ENCODE measurements at regions of chr16 and their contacts with region 1.

Region 1: GRCh38 chr16:3625911-3626732 is 14.7 kb upstream of the SLX4 start:
- DNase-seq: peak in 2 of 9 experiments; percentile 27 to 44
- ATAC-seq: peak; percentile 85
- H3K4me3 ChIP-seq: no peak overlapping the region
- H3K4me3 Mint-ChIP-seq: peak overlapping the region; percentile 13
- H3K27ac ChIP-seq: peak overlapping the region; percentile 18 to 37
- H3K27ac Mint-ChIP-seq: peak overlapping the region; percentile 89
- H3K4me1 ChIP-seq: peaks cover 25% of the 10 kb centered on the region
- H3K4me1 Mint-ChIP-seq: peaks cover 38% of the 10 kb centered on the region
- H3K27me3 ChIP-seq: no peaks in the 10 kb centered on the region
- H3K27me3 Mint-ChIP-seq: no peaks in the 10 kb centered on the region
- CTCF ChIP-seq: no peak

Region 2: DNA sequence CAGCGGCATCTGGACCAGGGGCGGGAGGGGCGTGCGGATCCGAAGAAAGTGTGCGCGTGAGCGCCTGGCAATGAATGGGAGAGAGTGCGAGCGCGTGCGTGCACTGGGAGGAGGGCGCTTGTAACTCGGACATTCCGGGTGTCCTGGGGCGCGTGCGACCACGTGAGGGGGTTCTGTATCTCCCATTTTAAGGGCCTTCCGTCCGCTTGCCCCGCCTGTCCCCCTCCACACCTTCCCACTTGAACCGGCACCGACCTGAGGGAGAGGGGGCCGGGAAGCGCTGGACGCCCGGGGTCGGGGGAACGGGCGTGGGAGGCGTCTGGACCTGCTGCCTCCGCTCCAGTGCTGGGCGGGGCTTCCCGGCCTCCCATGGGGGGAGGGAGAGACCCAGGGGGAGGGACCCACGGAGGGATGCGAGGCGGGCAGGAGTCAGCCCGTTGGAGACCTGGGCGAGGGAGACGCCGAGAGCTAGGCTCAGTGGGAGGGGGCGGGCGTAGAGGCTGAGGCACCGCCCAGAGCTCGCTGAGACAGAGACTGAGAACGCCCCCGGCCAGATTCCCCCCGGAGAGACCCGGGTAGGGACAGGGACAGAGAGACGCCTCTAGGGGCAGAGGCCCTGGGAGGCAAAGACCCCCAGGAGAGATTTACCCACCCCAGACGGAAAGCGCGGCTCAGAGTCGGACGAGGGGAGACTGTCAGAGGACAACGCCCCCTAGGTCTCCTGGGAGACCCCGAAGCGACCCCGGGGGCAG is 662.2 kb before region 1 on chr16 and contains the start of gene KREMEN2:
- CTCF ChIA-PET with region 1: no interaction called
- POLR2A ChIA-PET with region 1: no interaction called
- intact Hi-C with region 1: no loop called
- DNase-seq: peak in 3 of 9 experiments; percentile 16 to 58 (median 48)
- ATAC-seq: peak; percentile 23
- H3K4me3 ChIP-seq: peak within 1 kb of the TSS; percentile 33 to 46
- H3K4me3 Mint-ChIP-seq: peak within 1 kb of the TSS; percentile 81
- H3K27ac ChIP-seq: no peak within 1 kb of the TSS
- H3K27ac Mint-ChIP-seq: no peak within 1 kb of the TSS
- H3K4me1 ChIP-seq: peaks cover 58% of the 10 kb centered on the region
- H3K4me1 Mint-ChIP-seq: peaks cover 35% of the 10 kb centered on the region
- H3K27me3 ChIP-seq: peaks cover 27 to 48% of the 10 kb centered on the region in 2 experiments
- H3K27me3 Mint-ChIP-seq: peaks cover 30% of the 10 kb centered on the region
- CTCF ChIP-seq: no peak
- total RNA-seq, gene KREMEN2: not detected

Region 3: DNA sequence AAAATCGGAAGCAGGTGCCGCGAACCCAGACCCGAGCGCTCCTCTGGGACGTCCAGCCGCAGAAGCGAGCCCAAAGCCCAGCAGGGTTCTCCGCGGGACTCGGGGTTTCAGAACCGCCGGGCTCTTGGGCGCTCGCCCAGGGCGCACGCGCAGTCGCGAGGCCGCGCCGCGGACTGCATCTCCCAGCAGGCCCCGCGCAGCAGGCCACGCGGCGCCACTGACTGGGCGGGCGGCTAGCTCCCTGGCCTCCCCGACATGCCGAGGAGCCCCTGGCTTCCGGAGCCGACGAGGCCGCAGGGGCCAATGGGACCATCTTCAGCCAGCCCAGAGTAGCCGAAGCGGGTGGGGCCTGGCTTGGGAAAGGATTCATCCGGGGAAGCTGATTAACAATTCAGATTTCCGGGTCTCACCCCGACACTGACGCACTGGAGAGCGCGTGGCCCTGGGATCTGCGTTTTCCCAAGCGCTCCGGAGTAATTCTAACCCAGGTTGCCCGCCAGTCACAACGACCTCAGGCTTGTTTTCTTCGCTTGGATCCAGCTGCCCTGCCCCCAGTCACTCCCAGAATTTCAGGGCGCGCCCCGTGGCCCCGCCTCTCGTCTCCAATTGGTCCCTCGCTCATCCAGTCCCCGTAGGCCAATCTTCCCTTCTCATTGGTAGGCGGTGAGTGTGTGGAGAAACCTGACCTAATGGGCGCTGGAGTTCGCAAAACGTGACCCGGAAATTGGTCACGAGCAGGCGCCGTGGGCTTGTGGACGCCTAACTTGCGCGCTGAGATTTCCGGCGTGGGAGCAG is 343.2 kb before region 1 on chr16 and contains the start of gene ZNF263:
- CTCF ChIA-PET with region 1: no interaction called
- POLR2A ChIA-PET with region 1: no interaction called
- intact Hi-C with region 1: no loop called
- DNase-seq: peak; percentile 82 to 98 (median 92)
- ATAC-seq: peak; percentile 88
- H3K4me3 ChIP-seq: peak within 1 kb of the TSS; percentile 84 to 92
- H3K4me3 Mint-ChIP-seq: peak within 1 kb of the TSS; percentile 89
- H3K27ac ChIP-seq: peak within 1 kb of the TSS; percentile 96 to 100
- H3K27ac Mint-ChIP-seq: peak within 1 kb of the TSS; percentile 96
- H3K4me1 ChIP-seq: peaks cover 28% of the 10 kb centered on the region
- H3K4me1 Mint-ChIP-seq: peaks cover 56% of the 10 kb centered on the region
- H3K27me3 ChIP-seq: no peaks in the 10 kb centered on the region
- H3K27me3 Mint-ChIP-seq: no peaks in the 10 kb centered on the region
- CTCF ChIP-seq: no peak
- total RNA-seq, gene ZNF263: 44.2 to 49.0 TPM

Region 4: GRCh38 chr16:3665508-3665907 is 39.4 kb after region 1 on chr16:
- CTCF ChIA-PET with region 1: no interaction called
- POLR2A ChIA-PET with region 1: no interaction called
- intact Hi-C with region 1: loop called in 1 of 2 experiments (anchors 1 kb)
- DNase-seq: peak in 8 of 9 experiments; percentile 28 to 74 (median 54)
- ATAC-seq: peak; percentile 99
- H3K4me3 ChIP-seq: no peak overlapping the region
- H3K4me3 Mint-ChIP-seq: no peak overlapping the region
- H3K27ac ChIP-seq: peak overlapping the region; percentile 17 to 28
- H3K27ac Mint-ChIP-seq: peak overlapping the region; percentile 63
- H3K4me1 ChIP-seq: peaks cover 16% of the 10 kb centered on the region
- H3K4me1 Mint-ChIP-seq: peaks cover 15% of the 10 kb centered on the region
- H3K27me3 ChIP-seq: no peaks in the 10 kb centered on the region
- H3K27me3 Mint-ChIP-seq: no peaks in the 10 kb centered on the region
- CTCF ChIP-seq: peak; percentile 47

Region 5: GRCh38 chr16:3696425-3697218 is 70.5 kb after region 1 on chr16:
- CTCF ChIA-PET with region 1: no interaction called
- POLR2A ChIA-PET with region 1: no interaction called
- intact Hi-C with region 1: no loop called
- DNase-seq: no peak
- ATAC-seq: no peak
- H3K4me3 ChIP-seq: no peak overlapping the region
- H3K4me3 Mint-ChIP-seq: no peak overlapping the region
- H3K27ac ChIP-seq: no peak overlapping the region
- H3K27ac Mint-ChIP-seq: no peak overlapping the region
- H3K4me1 ChIP-seq: peaks cover 6% of the 10 kb centered on the region
- H3K4me1 Mint-ChIP-seq: peaks cover 12% of the 10 kb centered on the region
- H3K27me3 ChIP-seq: no peaks in the 10 kb centered on the region
- H3K27me3 Mint-ChIP-seq: no peaks in the 10 kb centered on the region
- CTCF ChIP-seq: no peak